PC-9 (cell line): ENCODE measurements at regions of chr5 and their contacts with region 1.

Region 1: GRCh38 chr5:173331956-173332479 is 3.8 kb upstream of the STC2 start:
- DNase-seq: peak; percentile 55 to 57
- H3K4me3 ChIP-seq: no peak overlapping the region
- H3K27ac ChIP-seq: peak overlapping the region; percentile 100; the same call in 1 of the 2 replicates
- H3K4me1 ChIP-seq: peaks cover 64% of the 10 kb centered on the region
- H3K27me3 ChIP-seq: no peaks in the 10 kb centered on the region
- CTCF ChIP-seq: peak; percentile 72

Region 2: DNA sequence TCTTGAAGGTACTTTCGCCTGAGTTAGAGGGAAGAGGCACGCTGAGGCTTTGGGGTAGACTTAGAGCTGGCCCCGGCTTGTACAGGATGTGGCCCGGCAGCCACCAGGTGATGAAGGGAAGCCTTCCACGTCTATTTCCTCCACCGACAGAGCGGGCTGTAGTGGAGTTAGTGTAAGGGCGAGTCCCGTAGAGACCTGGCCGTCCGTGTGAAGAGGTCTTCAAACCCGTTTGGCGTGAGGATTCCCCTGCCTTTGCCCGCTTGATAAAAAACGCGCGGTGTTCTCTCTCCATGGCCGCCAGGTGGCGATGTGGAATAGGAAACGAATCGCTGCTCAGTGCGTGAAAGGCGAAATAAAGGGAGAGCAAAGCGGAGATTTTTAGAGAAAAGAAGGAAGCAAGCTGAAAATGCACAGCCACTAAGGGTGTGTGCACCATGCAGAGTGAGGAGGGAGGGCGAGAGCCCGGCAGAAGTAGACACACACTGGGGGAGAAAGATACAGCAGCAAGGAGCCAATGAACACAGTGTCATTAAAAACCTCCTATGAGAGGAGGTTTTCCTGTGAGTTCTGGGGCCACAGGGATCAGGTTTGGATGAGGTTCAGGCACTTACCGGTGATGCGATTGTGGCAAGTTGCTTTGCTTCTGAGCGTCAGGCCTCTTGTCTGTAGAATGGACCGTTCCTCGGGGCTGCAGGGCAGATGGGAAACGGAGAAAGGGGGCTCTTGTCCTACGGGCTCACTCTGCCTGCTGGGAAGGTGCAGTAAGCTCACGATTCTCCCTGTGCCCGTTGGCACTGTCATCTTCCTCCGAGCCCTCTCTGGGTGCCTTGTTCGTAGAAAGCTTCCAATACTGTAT is 38.0 kb before region 1 on chr5:
- CTCF ChIA-PET with region 1: interaction called, 10 read pairs
- POLR2A ChIA-PET with region 1: no interaction called
- intact Hi-C with region 1: loop called (anchors 1 kb)
- DNase-seq: peak; percentile 71 to 83
- H3K4me3 ChIP-seq: peak overlapping the region; percentile 45; the same call in 1 of the 2 replicates
- H3K27ac ChIP-seq: peak overlapping the region; percentile 28
- H3K4me1 ChIP-seq: peaks cover 26% of the 10 kb centered on the region
- H3K27me3 ChIP-seq: no peaks in the 10 kb centered on the region
- CTCF ChIP-seq: peak; percentile 92

Region 3: GRCh38 chr5:173454754-173455614 is 123.0 kb after region 1 on chr5:
- CTCF ChIA-PET with region 1: interaction called, 3 read pairs
- POLR2A ChIA-PET with region 1: no interaction called
- intact Hi-C with region 1: loop called (anchors 1 kb)
- DNase-seq: peak; percentile 80 to 98
- H3K4me3 ChIP-seq: peak overlapping the region; percentile 11; the same call in 1 of the 2 replicates
- H3K27ac ChIP-seq: peak overlapping the region; percentile 100
- H3K4me1 ChIP-seq: peaks cover 89% of the 10 kb centered on the region
- H3K27me3 ChIP-seq: no peaks in the 10 kb centered on the region
- CTCF ChIP-seq: peak; percentile 7; the same call in 1 of the 2 replicates

Region 4: DNA sequence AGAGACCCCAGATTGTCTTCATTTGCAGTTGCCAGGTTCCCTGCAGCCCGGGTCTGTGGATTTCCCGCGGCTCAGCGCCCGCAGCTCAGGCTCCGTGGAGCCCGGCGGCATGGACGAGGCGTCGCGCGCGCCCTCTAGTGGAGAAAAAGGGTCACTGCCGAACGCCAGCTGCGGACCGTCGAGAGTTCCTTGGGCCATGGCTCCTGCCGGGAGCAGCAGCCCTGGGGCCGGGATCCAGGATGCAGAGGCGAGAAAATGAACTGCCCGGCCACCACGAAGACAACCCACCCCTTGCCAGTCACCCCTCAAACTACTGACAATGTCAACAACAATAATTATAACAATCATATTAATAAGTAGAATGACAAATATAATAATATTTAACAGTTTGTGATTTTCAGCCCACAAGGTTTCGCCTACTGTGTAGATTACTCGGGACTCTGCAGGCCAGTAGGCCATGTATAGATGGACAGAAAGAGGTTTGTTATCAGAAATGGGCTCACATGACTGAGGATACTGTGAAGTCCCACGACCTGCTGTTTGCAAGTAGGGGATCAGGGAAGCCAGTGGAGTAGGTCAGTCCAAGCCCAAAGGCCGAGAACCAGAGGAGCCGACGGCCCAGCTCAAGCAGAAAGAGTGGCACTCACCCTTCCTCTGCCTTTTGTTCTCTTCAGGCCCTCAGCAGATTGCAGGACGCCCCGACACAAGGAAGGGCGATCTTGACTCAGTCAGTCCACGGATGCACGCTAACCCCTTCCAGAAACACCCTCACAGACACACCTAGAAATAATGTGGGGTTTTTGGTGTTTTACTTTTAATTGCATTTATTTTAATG is 241.3 kb after region 1 on chr5:
- CTCF ChIA-PET with region 1: interaction called, 3 read pairs
- POLR2A ChIA-PET with region 1: no interaction called
- intact Hi-C with region 1: loop called (anchors 1 kb)
- DNase-seq: peak; percentile 43 to 77
- H3K4me3 ChIP-seq: peak overlapping the region; percentile 36; the same call in 1 of the 2 replicates
- H3K27ac ChIP-seq: no peak overlapping the region
- H3K4me1 ChIP-seq: peaks cover 14% of the 10 kb centered on the region
- H3K27me3 ChIP-seq: no peaks in the 10 kb centered on the region
- CTCF ChIP-seq: peak; percentile 94

Region 5: DNA sequence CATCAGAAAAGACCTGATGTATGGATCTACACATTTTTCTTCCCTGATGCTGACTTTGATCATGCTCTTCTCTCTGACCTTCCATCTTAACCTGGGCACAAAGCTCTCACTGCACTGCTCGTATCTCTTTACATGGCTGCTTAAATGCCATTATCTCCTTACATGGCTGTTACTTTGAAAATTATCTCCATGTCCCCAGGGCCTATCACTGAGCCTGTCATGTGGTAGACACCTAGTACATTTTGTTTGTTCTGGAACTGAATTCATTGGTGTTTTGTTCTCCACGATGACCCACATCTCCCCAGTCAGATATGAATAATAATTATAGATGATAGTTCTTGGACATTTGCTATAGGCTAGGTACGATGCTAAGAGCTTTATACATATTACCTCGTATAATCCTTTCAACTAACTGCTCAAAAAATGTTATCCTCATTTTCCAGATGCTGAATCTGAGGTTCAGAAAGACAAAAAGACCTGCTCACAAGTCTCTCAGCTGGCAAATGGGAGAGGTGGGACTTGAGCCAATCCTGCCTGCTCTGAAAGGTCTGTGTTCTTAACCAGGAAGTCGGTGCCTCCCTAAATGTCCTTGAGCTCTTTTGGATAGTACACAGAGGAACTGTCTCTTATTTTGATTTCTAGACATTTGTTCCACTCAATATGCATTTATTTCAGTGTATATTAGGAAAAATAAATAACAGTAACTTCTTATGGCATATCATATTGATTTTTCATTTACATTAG is 546.4 kb after region 1 on chr5:
- CTCF ChIA-PET with region 1: no interaction called
- POLR2A ChIA-PET with region 1: interaction called, 14 read pairs
- intact Hi-C with region 1: no loop called
- DNase-seq: no peak
- H3K4me3 ChIP-seq: no peak overlapping the region
- H3K27ac ChIP-seq: no peak overlapping the region
- H3K4me1 ChIP-seq: peaks cover 27% of the 10 kb centered on the region
- H3K27me3 ChIP-seq: no peaks in the 10 kb centered on the region
- CTCF ChIP-seq: no peak